Left ventricle myocardium inferior (tissue), 1 donor: ENCODE measurements at regions of chrX and their contacts with region 1.

Region 1: GRCh38 chrX:45322382-45322781 is 121.7 kb upstream of the DIPK2B start:
- DNase-seq: no peak
- H3K4me3 ChIP-seq: no peak overlapping the region
- H3K27ac ChIP-seq: no peak overlapping the region
- H3K4me1 ChIP-seq: no peaks in the 10 kb centered on the region
- H3K27me3 ChIP-seq: no peaks in the 10 kb centered on the region
- CTCF ChIP-seq: peak; percentile 57

Region 2: DNA sequence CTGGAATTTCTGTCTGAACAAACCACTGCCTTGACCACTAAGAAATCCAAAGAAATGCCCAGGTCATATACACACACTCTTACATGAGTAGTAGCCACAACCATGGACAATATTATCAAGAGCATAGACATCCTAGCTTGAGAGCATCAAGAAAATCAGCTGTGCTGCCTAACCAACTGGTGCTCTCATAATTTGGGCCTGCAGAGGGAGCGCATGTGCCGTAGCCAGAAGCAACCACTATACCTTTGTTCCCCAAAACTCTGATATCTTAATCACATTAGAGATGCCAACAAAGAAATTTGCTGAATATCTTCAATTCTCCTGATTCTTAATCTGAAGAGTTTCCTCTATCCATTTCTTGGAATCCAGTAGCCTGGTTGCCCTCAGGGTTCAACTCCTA is 1059.2 kb after region 1 on chrX:
- intact Hi-C with region 1: loop called (anchors 10 kb)
- DNase-seq: no peak
- H3K4me3 ChIP-seq: no peak overlapping the region
- H3K27ac ChIP-seq: no peak overlapping the region
- H3K4me1 ChIP-seq: no peaks in the 10 kb centered on the region
- H3K27me3 ChIP-seq: no peaks in the 10 kb centered on the region
- CTCF ChIP-seq: peak; percentile 40